PC-9 (cell line): ENCODE measurements at regions of chr18 and their contacts with region 1.

Region 1: GRCh38 chr18:63676526-63676925 is 14.8 kb upstream of the SERPINB3 start:
- DNase-seq: peak in 1 of 2 experiments; percentile 16
- H3K4me3 ChIP-seq: no peak overlapping the region
- H3K27ac ChIP-seq: no peak overlapping the region
- H3K4me1 ChIP-seq: peaks cover 4% of the 10 kb centered on the region
- H3K27me3 ChIP-seq: no peaks in the 10 kb centered on the region
- CTCF ChIP-seq: peak; percentile 60

Region 2: GRCh38 chr18:63867368-63867767 is 190.8 kb after region 1 on chr18:
- CTCF ChIA-PET with region 1: no interaction called
- POLR2A ChIA-PET with region 1: interaction called, 10 read pairs
- intact Hi-C with region 1: no loop called
- DNase-seq: no peak
- H3K4me3 ChIP-seq: no peak overlapping the region
- H3K27ac ChIP-seq: no peak overlapping the region; the same call in 1 of the 2 replicates
- H3K4me1 ChIP-seq: no peaks in the 10 kb centered on the region; the same call in 1 of the 2 replicates
- H3K27me3 ChIP-seq: no peaks in the 10 kb centered on the region
- CTCF ChIP-seq: no peak